HCT116 (cell line): ENCODE measurements at regions of chr2 and their contacts with region 1.

Region 1: GRCh38 chr2:102301867-102302362 is 9.4 kb upstream of the IL1RL1 start:
- DNase-seq: peak; percentile 39
- ATAC-seq: peak; percentile 94
- H3K4me3 ChIP-seq: no peak overlapping the region
- H3K27ac ChIP-seq: no peak overlapping the region
- H3K4me1 ChIP-seq: 0 out of 4 replicates have a peak, but pooled peaks cover 0 to 3% of the 10 kb centered on the region in 2 experiments
- H3K27me3 ChIP-seq: 0 out of 2 replicates have a peak, but pooled peaks cover 3% of the 10 kb centered on the region
- CTCF ChIP-seq: peak; percentile 32 to 67 (median 64); a peak in 5 of 6 replicates
- POLR2A ChIP-seq: no peak
- RAD21 ChIP-seq: peak; percentile 37; the same call in 1 of the 2 replicates

Region 2: GRCh38 chr2:102313025-102313424 is 11.1 kb after region 1 on chr2:
- CTCF ChIA-PET with region 1: interaction called, 10 read pairs
- POLR2A ChIA-PET with region 1: no interaction called
- RAD21 ChIA-PET with region 1: no interaction called
- intact Hi-C with region 1: no loop called
- DNase-seq: no peak
- ATAC-seq: no peak
- H3K4me3 ChIP-seq: no peak overlapping the region
- H3K27ac ChIP-seq: no peak overlapping the region
- H3K4me1 ChIP-seq: no peaks in the 10 kb centered on the region
- H3K27me3 ChIP-seq: no peaks in the 10 kb centered on the region
- CTCF ChIP-seq: no peak
- POLR2A ChIP-seq: no peak
- RAD21 ChIP-seq: no peak